Stomach (tissue), 19 donors: ENCODE measurements at regions of chr2 and their contacts with region 1.

Region 1: DNA sequence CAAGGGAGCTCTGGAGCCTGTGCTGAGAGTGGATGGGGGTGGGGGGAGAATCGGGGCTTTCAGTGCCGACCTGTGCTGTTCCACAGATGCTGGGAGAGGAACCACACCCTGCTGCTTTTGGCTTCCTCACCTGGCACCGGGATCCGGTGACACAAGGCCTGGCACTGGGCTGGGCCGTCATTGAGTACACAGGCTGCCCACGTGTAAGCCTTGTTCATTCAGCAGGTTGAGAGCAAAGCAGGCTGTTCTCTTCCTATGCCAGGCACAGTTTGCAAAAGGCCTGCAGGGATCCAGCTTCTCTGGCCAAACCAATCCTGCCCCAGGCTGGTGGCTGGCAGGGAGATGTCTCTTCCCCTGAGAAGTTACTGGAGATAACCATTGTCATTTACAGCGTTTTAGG is 17.1 kb downstream of the TRIB2 start:
- DNase-seq: peak in 1 of 2 donors; percentile 90
- H3K4me3 ChIP-seq: no peak overlapping the region
- H3K27ac ChIP-seq: peak overlapping the region; percentile 5 to 72 (median 69)
- H3K4me1 ChIP-seq: peaks cover 38 to 77% (median 55%) of the 10 kb centered on the region in 4 donors
- H3K27me3 ChIP-seq: no peaks in the 10 kb centered on the region
- CTCF ChIP-seq: no peak
- EP300 ChIP-seq: no peak
- POLR2A ChIP-seq: no peak

Region 2: GRCh38 chr2:11863513-11864328 is 870.1 kb before region 1 on chr2:
- intact Hi-C with region 1: loop called (anchors 10 kb)
- DNase-seq: peak; percentile 80 to 91
- H3K4me3 ChIP-seq: peak overlapping the region in 3 of 4 donors; percentile 12 to 25 (median 14)
- H3K27ac ChIP-seq: peak overlapping the region in 3 of 5 donors; percentile 25 to 53 (median 35)
- H3K4me1 ChIP-seq: peaks cover 0 to 15% (median 8%) of the 10 kb centered on the region in 4 donors
- H3K27me3 ChIP-seq: no peaks in the 10 kb centered on the region
- CTCF ChIP-seq: peak in 6 of 7 experiments; percentile 25 to 97 (median 96)
- EP300 ChIP-seq: no peak
- POLR2A ChIP-seq: no peak

Region 3: DNA sequence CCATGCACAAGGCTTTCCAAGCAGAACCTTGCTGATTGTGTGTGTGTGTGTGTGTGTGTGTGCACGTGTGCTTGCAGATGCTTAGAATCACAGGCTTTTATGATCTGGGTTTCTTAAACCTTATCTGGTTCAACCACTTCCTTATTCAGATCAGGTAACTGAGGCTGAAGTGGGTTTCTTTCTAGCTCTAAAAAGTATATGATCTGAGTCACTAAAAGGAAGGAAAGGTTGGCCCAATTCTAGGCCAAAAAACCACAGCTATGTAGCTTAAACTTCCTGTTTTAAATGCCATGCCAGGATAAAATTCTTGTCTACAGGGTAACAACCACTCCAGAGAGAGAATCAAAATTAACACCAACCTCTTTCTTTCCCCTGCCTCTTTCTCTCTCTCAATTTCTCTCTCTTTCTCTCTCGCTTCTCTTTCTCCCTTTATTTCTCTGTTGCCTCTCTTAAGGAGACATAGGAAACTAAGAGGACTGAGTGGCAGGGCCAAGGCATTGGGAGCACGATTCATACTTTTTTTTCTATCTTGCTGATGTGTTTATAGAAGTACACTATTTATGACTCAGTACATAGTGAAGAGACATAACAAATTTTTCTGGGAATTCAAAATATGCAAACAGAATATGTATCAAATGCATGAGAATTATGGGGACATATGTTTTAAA is 123.2 kb after region 1 on chr2:
- intact Hi-C with region 1: no loop called
- DNase-seq: peak in 1 of 2 donors; percentile 39
- H3K4me3 ChIP-seq: no peak overlapping the region
- H3K27ac ChIP-seq: no peak overlapping the region
- H3K4me1 ChIP-seq: peaks cover 0 to 6% (median 0%) of the 10 kb centered on the region in 4 donors
- H3K27me3 ChIP-seq: no peaks in the 10 kb centered on the region
- CTCF ChIP-seq: no peak
- EP300 ChIP-seq: no peak
- POLR2A ChIP-seq: no peak

Region 4: DNA sequence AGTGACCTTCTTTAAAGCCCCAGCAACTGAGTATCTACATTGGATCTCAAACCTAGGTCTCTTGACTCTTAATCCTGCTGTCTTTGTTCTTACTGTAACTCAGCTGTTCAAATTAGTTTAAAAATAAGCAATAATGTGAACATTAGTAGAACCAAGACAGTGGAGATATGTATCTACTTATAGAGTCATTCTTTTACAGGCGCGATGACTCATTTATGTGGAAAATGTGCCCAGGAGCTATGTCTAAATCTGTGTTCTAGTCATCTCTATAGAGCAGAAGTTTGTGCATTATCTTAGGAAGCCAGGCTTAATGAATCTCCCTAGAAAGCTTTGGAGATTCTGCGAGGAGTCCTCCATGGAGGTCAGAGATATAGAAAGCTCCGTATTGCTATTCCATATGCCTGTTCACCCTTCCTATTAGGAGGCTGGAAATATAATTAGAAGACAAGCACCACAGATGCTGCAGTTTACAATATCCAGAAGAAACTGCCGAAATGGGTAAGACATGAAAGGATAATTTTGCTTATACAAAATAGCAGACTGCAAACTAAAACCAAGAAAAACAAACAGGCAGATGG is 194.4 kb after region 1 on chr2:
- intact Hi-C with region 1: loop called (anchors 10 kb)
- DNase-seq: no peak
- H3K4me3 ChIP-seq: no peak overlapping the region
- H3K27ac ChIP-seq: no peak overlapping the region
- H3K4me1 ChIP-seq: peaks cover 0 to 6% (median 0%) of the 10 kb centered on the region in 4 donors
- H3K27me3 ChIP-seq: no peaks in the 10 kb centered on the region
- CTCF ChIP-seq: no peak
- EP300 ChIP-seq: no peak
- POLR2A ChIP-seq: no peak

Region 5: DNA sequence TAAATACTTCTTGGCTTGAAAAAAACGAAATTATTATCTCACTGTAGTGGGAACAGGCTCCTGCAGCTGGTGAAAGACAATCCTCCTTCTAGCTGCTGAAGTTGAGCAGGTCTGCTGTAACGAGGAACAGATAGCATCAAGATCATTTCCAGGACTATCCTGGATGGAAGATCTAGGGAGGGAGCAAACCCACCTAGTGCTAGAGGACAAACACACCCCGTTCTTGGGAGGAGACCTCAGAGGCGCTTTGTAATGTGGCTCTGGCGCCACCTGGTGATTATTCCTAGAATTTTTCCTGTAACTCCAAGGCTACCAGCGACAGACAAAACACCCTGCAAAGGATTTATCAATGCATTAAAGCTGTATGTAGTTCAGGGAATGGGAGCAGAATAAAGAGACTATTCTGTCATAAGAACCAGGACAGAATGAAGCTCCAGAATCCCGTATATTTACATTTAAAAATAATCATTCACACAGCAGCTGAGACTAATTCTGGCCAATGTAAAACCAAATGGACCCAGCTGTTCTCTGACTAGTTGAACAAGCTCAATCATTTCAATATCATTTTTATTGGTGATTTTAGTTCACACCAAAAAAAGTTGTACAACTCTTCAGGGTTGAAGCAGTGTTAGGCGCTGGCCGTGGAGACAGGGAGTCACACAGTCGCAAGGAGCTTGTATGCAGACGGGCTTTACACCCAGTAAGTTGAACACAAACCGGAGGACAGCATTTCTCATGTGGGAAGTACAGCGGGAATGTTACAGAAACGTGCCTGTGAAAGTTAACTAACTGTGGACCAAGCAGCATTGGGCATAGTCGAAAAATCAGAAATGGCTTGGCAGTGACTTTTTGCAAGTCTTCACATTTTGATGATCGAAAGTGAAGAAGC is 273.2 kb after region 1 on chr2:
- intact Hi-C with region 1: loop called (anchors 10 kb)
- DNase-seq: peak; percentile 68 to 90
- H3K4me3 ChIP-seq: no peak overlapping the region
- H3K27ac ChIP-seq: no peak overlapping the region
- H3K4me1 ChIP-seq: peaks cover 0 to 27% (median 11%) of the 10 kb centered on the region in 4 donors
- H3K27me3 ChIP-seq: no peaks in the 10 kb centered on the region
- CTCF ChIP-seq: peak in 5 of 7 experiments; percentile 82 to 89 (median 85)
- EP300 ChIP-seq: no peak
- POLR2A ChIP-seq: no peak